Activated CD4-positive, alpha-beta T cell treated with anti-CD3 and anti-CD28 coated beads for 36 hours (primary cell): ENCODE measurements at regions of chr10 and their contacts with region 1.

Region 1: DNA sequence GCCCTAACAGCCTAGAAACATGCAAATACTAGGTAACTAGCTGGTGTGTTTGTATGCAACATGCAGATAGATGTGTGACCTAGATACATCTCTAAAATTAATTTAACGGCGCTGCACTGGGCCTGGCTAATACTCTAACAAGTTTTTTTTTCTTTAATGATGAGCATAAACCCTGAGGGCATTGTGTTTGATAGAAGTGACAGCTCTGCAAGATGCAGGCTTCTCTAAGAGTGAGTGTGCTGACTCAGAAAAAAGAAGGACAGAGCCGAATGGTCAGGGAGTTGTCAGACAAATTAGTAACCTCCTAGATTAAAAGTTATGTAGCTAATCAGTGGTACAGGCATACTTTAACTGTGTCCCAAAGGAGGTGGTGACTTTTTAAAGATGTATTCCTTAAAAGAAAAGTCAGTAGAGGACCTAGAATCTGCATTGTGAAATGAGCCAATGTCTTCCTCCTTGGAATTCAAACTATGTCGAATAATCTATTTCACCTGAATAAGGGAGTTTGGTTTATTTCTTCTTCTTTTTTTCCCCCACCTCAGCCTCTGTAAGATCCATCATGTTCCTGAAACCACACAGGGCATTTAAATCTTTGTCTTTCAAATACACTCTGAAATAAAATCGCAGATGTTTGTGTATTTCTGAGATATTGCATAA is 315.1 kb downstream of the GFRA1 start:
- DNase-seq: no peak
- ATAC-seq: no peak
- H3K4me3 Mint-ChIP-seq: no peak overlapping the region
- H3K27ac Mint-ChIP-seq: no peak overlapping the region
- H3K4me1 Mint-ChIP-seq: no peaks in the 10 kb centered on the region
- H3K27me3 Mint-ChIP-seq: no peaks in the 10 kb centered on the region

Region 2: GRCh38 chr10:115278294-115278693 is 679.6 kb before region 1 on chr10:
- CTCF ChIA-PET with region 1: no interaction called
- POLR2A ChIA-PET with region 1: interaction called, 12 read pairs
- intact Hi-C with region 1: no loop called
- DNase-seq: no peak
- ATAC-seq: no peak
- H3K4me3 Mint-ChIP-seq: no peak overlapping the region
- H3K27ac Mint-ChIP-seq: no peak overlapping the region
- H3K4me1 Mint-ChIP-seq: no peaks in the 10 kb centered on the region
- H3K27me3 Mint-ChIP-seq: no peaks in the 10 kb centered on the region

Region 3: GRCh38 chr10:116190883-116191282 is 233.0 kb after region 1 on chr10:
- CTCF ChIA-PET with region 1: no interaction called
- POLR2A ChIA-PET with region 1: no interaction called
- intact Hi-C with region 1: no loop called
- DNase-seq: no peak
- ATAC-seq: no peak
- H3K4me3 Mint-ChIP-seq: no peak overlapping the region
- H3K27ac Mint-ChIP-seq: no peak overlapping the region
- H3K4me1 Mint-ChIP-seq: no peaks in the 10 kb centered on the region
- H3K27me3 Mint-ChIP-seq: no peaks in the 10 kb centered on the region